ENCODE measurements at regions of chr10 and their contacts with region 1.

Region 1: GRCh38 chr10:5645375-5645774 is 21.0 kb downstream of the ASB13 start:
- DNase-seq: peak; percentile 77

Region 2: GRCh38 chr10:5659702-5660528 is 14.5 kb after region 1 on chr10:
- intact Hi-C with region 1: loop called in 1 of 2 experiments (anchors 1 kb)
- DNase-seq: peak; percentile 88